Activated CD4-positive, alpha-beta memory T cell treated with anti-CD3 and anti-CD28 coated beads, Interleukin-2, amount 10 ng/mL, durations not matched to agents 7 days and 5 days (primary cell): ENCODE measurements at regions of chr19 and their contacts with region 1.

Region 1: GRCh38 chr19:21082011-21082975 is at the start of gene ZNF714:
- DNase-seq: peak; percentile 91
- H3K4me3 Mint-ChIP-seq: peak within 1 kb of the TSS; percentile 99
- H3K27ac Mint-ChIP-seq: peak within 1 kb of the TSS; percentile 98
- H3K4me1 Mint-ChIP-seq: peaks cover 34% of the 10 kb centered on the region
- H3K27me3 Mint-ChIP-seq: no peaks in the 10 kb centered on the region
- total RNA-seq, gene ZNF714: 20.4 to 23.7 TPM

Region 2: DNA sequence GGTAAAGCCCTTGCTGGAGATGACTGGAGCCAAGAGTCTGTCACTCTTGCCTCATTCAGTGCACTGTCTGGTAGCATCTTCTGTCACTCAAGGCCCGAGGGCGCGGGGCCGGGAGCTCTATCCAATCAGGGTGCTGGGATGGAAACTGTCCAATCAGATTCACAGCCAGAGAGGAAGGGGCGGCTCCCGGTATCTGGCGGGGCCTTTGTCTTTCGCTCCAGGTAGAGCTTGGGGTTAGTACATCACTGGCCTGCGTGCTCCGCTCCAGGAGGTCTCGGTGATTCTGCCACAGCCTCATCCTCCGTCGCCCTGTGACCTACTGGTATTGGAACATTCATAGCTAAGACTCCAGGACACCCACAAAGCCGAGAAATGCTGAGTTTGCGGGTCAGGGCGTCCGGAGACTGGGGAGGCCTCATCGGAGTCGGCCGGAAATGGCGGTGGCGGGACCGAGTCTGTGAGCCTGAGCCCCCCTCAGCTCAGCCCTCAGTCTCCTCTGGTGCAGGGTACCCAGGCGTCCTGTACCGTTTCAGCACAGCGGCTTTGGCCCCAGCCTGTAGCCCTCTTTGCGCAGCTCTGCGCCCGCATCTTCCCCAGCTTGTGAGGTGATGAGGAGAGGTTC is 82.5 kb before region 1 on chr19:
- CTCF ChIA-PET with region 1: no interaction called
- POLR2A ChIA-PET with region 1: interaction called, 18 read pairs
- DNase-seq: peak; percentile 88
- H3K4me3 Mint-ChIP-seq: peak overlapping the region; percentile 85
- H3K27ac Mint-ChIP-seq: peak overlapping the region; percentile 79
- H3K4me1 Mint-ChIP-seq: peaks cover 20% of the 10 kb centered on the region
- H3K27me3 Mint-ChIP-seq: no peaks in the 10 kb centered on the region

Region 3: DNA sequence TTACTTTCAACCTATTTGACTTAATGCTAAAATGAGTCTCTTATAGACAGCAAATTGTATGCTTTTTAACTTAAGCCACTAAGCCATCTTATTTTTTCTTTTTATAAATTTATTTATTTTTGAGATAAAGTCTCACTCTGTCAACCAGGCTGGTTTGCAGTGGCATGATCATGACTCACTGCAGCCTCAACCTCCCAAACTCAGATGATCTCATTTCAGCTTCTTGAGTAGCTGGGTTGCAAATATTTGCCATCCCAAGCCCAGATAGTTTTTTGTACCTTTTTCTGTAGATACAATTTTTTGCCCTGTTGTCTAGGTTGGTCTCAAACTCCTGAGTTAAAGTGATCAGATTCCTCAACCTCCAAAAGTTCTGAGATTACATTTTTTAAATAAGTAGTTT is 26.8 kb after region 1 on chr19:
- CTCF ChIA-PET with region 1: no interaction called
- POLR2A ChIA-PET with region 1: no interaction called
- DNase-seq: no peak
- H3K4me3 Mint-ChIP-seq: no peak overlapping the region
- H3K27ac Mint-ChIP-seq: no peak overlapping the region
- H3K4me1 Mint-ChIP-seq: no peaks in the 10 kb centered on the region
- H3K27me3 Mint-ChIP-seq: no peaks in the 10 kb centered on the region

Region 4: DNA sequence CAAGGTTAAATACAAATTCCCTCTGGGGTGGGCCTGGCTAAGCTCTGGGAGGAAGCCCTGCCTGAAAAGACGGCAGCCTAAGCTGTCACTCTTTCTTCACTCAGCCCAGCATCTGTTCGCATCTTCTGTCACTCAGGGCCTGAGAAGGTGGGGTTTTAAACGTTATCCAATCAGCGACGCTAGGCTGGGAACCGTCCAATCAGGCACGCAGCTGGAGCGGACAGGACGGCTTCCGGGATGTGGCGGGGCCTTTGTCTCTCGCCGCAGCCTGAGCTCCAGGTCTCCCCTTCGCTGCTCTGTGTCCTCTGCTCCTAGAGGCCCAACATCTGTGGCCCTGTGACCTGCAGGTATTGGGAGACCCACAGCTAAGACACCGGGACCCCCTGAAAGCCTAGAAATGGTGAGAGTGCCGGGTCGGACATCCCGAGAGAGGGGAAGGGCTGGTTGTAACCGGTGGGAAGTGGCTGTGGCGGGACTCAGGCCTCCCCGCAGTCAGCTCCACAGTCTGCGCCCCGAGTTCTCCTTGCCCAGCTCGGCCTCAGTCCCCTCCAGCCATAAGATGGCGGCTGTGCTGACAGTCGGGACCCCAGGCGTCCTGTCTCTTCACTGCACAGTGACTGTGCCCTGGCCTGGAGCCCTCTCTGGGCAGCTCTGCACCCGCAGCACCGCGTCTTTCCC is 59.6 kb after region 1 on chr19 and contains the start of gene ZNF431:
- CTCF ChIA-PET with region 1: interaction called, 3 read pairs
- POLR2A ChIA-PET with region 1: interaction called, 31 read pairs
- DNase-seq: peak; percentile 93
- H3K4me3 Mint-ChIP-seq: peak within 1 kb of the TSS; percentile 96
- H3K27ac Mint-ChIP-seq: peak within 1 kb of the TSS; percentile 91
- H3K4me1 Mint-ChIP-seq: peaks cover 22% of the 10 kb centered on the region
- H3K27me3 Mint-ChIP-seq: no peaks in the 10 kb centered on the region
- total RNA-seq, gene ZNF431: 16.1 to 20.5 TPM